Left lung (tissue), 14 donors: ENCODE measurements at regions of chr14 and their contacts with region 1.

Region 1: GRCh38 chr14:65927931-65928356 is 515.4 kb downstream of the FUT8 start:
- DNase-seq: peak in 2 of 4 donors; percentile 4 to 21
- ATAC-seq: peak; percentile 41
- H3K4me3 ChIP-seq: no peak overlapping the region
- H3K27ac ChIP-seq: no peak overlapping the region
- H3K4me1 ChIP-seq: no peaks in the 10 kb centered on the region
- H3K27me3 ChIP-seq: peaks cover 0 to 8% of the 10 kb centered on the region in 2 donors
- CTCF ChIP-seq: no peak

Region 2: GRCh38 chr14:65832431-65833266 is 95.3 kb before region 1 on chr14:
- intact Hi-C with region 1: no loop called
- DNase-seq: peak in 2 of 4 donors; percentile 10 to 13
- ATAC-seq: no peak
- H3K4me3 ChIP-seq: no peak overlapping the region
- H3K27ac ChIP-seq: no peak overlapping the region
- H3K4me1 ChIP-seq: no peaks in the 10 kb centered on the region
- H3K27me3 ChIP-seq: peaks cover 0 to 5% of the 10 kb centered on the region in 2 donors
- CTCF ChIP-seq: no peak

Region 3: DNA sequence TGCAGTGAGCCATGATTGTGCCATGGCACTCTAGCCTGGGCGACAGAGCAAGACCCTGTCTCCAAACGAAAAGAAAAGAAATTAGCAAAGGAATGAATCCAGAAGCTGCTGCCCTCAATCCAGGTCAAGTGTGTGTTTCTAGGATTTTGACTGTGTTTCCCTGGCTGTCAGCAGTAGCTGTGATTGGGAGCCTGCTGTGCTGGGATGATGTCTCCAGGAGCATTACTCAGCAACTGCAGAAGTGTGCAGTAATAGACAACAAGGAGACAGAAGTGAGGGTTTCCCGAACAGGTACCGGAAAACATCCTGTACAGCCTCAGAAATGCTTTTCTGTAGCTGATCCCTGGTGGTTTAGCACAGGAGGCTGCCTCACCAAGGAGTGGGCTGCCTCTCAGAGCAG is 23.0 kb before region 1 on chr14:
- intact Hi-C with region 1: loop called in 1 of 2 experiments (anchors 2 kb)
- DNase-seq: no peak
- ATAC-seq: no peak
- H3K4me3 ChIP-seq: no peak overlapping the region
- H3K27ac ChIP-seq: no peak overlapping the region
- H3K4me1 ChIP-seq: no peaks in the 10 kb centered on the region
- H3K27me3 ChIP-seq: no peaks in the 10 kb centered on the region
- CTCF ChIP-seq: no peak